ENCODE measurements at regions of chr5 and their contacts with region 1.

Region 1: DNA sequence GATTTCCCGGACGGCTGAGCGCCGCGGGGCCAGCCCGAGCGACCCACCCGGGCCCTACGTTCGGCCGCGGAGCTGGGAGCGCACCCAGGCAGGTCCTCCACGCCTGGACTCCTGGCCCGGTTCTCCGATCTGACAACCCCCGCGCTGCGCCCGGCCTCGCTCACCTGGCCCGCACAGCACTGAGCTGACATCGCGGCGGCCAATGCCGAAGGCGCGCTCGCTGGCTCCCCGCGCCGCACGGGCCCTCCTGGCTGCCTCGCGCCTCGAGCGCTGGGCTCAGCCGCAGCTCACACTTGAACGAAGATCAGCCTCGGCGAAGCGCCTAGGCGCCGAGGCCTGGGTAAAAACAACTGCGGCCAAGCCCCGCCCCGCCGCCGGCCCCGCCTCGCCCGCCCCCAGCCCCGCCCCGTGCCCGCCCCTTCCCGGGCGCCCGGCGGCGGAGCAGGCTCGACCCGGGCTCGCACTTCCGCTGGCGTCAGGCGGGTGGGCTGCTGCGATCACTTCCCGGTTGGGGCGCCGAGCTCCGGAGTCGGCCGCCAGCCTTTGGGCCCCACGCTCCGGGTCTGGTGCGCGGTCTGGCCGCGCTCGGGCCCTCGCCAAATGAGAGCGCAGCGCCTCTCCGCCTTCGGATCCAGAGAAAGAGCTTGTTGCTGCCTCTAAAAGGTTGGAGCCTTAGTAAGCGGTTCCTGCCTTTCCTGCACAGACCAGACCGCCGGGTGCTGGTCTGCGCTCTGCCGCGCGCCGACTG is at the start of gene SERINC5:
- DNase-seq: peak; percentile 83 to 93
- H3K4me3 ChIP-seq: peak within 1 kb of the TSS; percentile 76 to 97
- H3K27ac ChIP-seq: peak within 1 kb of the TSS; percentile 92 to 95
- H3K4me1 ChIP-seq: peaks cover 0 to 33% (median 19%) of the 10 kb centered on the region in 4 donors
- H3K27me3 ChIP-seq: no peaks in the 10 kb centered on the region
- CTCF ChIP-seq: peak in 1 of 2 experiments; percentile 3

Region 2: GRCh38 chr5:79235634-79236363 is 1020.1 kb before region 1 on chr5 and contains the start of gene JMY:
- intact Hi-C with region 1: loop called (anchors 10 kb)
- DNase-seq: peak; percentile 90 to 91
- H3K4me3 ChIP-seq: peak within 1 kb of the TSS; percentile 62 to 82
- H3K27ac ChIP-seq: peak within 1 kb of the TSS; percentile 87 to 95
- H3K4me1 ChIP-seq: peaks cover 0 to 34% (median 16%) of the 10 kb centered on the region in 4 donors
- H3K27me3 ChIP-seq: no peaks in the 10 kb centered on the region
- CTCF ChIP-seq: peak in 1 of 2 experiments; percentile 12

Region 3: GRCh38 chr5:79811081-79811480 is 444.8 kb before region 1 on chr5:
- intact Hi-C with region 1: no loop called
- DNase-seq: no peak
- H3K4me3 ChIP-seq: no peak overlapping the region
- H3K27ac ChIP-seq: no peak overlapping the region
- H3K4me1 ChIP-seq: no peaks in the 10 kb centered on the region
- H3K27me3 ChIP-seq: no peaks in the 10 kb centered on the region
- CTCF ChIP-seq: no peak

Region 4: DNA sequence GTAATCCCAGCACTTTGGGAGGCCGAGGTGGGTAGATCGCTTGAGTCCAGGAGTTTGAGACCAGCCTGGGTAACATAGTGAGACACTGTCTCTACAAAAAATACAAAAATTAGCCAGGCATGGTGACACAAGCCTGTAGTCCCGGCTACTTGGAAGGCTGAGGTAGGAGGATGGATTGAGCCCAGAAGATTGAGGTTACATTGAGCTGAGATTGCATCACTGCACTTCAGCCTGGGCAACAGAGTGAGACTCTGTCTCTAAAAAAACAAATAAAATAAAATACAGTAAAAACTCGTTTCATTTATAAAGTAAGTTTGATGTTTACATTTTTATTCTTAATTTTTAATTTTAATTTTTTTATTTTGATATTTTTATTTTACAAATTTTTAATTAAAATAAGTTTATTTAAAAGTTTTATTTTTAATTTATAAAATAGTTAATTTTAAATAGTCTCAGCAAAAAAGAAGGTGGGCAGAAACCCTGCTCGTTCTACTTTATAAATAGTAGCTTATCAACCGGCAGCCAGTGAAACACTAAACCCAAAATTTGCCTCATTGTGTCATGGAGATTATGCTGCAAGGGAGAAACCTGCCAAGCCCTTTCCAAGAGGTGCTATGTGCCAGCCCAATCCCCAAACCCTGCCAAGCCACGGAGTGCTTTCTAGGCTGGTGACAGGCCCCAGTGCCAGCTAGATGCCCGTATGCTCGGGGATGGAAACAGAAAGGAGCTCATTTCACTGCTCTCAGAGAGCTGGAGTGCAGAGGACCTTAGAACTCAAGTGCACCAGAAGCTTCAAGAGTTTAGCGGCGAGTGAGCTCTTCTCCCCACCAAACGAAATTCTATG is 38.9 kb before region 1 on chr5:
- intact Hi-C with region 1: loop called (anchors 5 kb)
- DNase-seq: peak; percentile 49 to 92
- H3K4me3 ChIP-seq: no peak overlapping the region
- H3K27ac ChIP-seq: peak overlapping the region; percentile 43 to 51
- H3K4me1 ChIP-seq: peaks cover 0 to 17% (median 4%) of the 10 kb centered on the region in 4 donors
- H3K27me3 ChIP-seq: no peaks in the 10 kb centered on the region
- CTCF ChIP-seq: no peak

Region 5: GRCh38 chr5:80308526-80308925 is 52.6 kb after region 1 on chr5:
- intact Hi-C with region 1: no loop called
- DNase-seq: no peak
- H3K4me3 ChIP-seq: no peak overlapping the region
- H3K27ac ChIP-seq: no peak overlapping the region
- H3K4me1 ChIP-seq: peaks cover 0 to 4% (median 0%) of the 10 kb centered on the region in 4 donors
- H3K27me3 ChIP-seq: no peaks in the 10 kb centered on the region
- CTCF ChIP-seq: no peak

Region 6: GRCh38 chr5:80360914-80361444 is 105.1 kb after region 1 on chr5:
- intact Hi-C with region 1: no loop called
- DNase-seq: no peak
- H3K4me3 ChIP-seq: no peak overlapping the region
- H3K27ac ChIP-seq: no peak overlapping the region
- H3K4me1 ChIP-seq: no peaks in the 10 kb centered on the region
- H3K27me3 ChIP-seq: no peaks in the 10 kb centered on the region
- CTCF ChIP-seq: no peak

Region 7: GRCh38 chr5:80407735-80408482 is 152.0 kb after region 1 on chr5 and contains the start of gene ZFYVE16:
- intact Hi-C with region 1: loop called (anchors 2 kb)
- DNase-seq: peak; percentile 97 to 99
- H3K4me3 ChIP-seq: peak within 1 kb of the TSS; percentile 96
- H3K27ac ChIP-seq: peak within 1 kb of the TSS; percentile 96 to 99
- H3K4me1 ChIP-seq: peaks cover 0 to 36% (median 12%) of the 10 kb centered on the region in 4 donors
- H3K27me3 ChIP-seq: no peaks in the 10 kb centered on the region
- CTCF ChIP-seq: peak; percentile 42 to 59

Measured in tibial artery (tissue), 4 donors.